ENCODE measurements at regions of chr11 and their contacts with region 1.

Region 1: DNA sequence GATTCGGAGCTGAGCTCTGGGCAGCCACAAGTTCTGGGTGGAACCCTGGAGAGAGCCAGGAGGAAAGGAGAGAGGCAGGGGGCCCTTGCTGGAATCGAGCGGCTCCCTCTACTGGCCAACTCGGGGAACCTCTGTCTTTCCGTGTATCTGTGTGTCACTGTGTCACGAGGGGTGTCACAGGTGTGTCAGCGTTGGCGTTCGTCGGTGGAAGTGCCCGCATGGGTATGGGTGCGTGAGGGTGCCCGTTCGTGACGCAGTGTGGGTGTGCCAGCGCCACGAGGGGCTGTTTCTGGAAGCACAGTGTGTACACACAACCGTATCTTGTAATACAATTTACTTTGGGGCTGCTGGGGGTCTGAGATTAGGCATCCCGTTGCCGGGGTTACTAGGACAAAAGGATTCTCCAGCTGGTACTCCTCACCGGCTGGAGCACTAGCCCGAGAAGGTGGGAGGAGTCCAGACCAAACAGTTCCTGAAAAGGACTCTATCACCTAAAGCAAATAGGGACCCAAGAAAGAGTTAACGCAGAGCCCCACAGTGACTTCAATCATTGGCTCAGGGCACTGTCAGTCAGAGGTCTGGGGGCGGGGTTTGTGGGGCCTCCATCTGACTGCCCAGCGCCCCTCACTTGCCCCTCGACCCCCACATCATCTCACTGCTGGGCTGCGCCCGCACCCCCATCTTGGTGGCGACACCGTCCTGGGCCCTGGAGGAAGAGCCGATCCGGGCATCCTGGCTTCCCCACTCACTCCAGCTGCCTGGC is 2.6 kb upstream of the BCL9L start:
- DNase-seq: no peak
- H3K4me3 ChIP-seq: peak overlapping the region; percentile 72
- CTCF ChIP-seq: peak; percentile 89

Region 2: GRCh38 chr11:118715837-118716260 is 212.4 kb before region 1 on chr11:
- CTCF ChIA-PET with region 1: no interaction called
- POLR2A ChIA-PET with region 1: no interaction called
- DNase-seq: no peak
- H3K4me3 ChIP-seq: no peak overlapping the region
- CTCF ChIP-seq: no peak

Region 3: GRCh38 chr11:118771547-118772288 is 156.6 kb before region 1 on chr11:
- CTCF ChIA-PET with region 1: interaction called, 12 read pairs
- POLR2A ChIA-PET with region 1: no interaction called
- DNase-seq: no peak
- H3K4me3 ChIP-seq: no peak overlapping the region
- CTCF ChIP-seq: no peak

Region 4: GRCh38 chr11:118878163-118878563 is 50.1 kb before region 1 on chr11:
- CTCF ChIA-PET with region 1: interaction called, 11 read pairs
- POLR2A ChIA-PET with region 1: no interaction called
- DNase-seq: no peak
- H3K4me3 ChIP-seq: no peak overlapping the region
- CTCF ChIP-seq: no peak

Region 5: DNA sequence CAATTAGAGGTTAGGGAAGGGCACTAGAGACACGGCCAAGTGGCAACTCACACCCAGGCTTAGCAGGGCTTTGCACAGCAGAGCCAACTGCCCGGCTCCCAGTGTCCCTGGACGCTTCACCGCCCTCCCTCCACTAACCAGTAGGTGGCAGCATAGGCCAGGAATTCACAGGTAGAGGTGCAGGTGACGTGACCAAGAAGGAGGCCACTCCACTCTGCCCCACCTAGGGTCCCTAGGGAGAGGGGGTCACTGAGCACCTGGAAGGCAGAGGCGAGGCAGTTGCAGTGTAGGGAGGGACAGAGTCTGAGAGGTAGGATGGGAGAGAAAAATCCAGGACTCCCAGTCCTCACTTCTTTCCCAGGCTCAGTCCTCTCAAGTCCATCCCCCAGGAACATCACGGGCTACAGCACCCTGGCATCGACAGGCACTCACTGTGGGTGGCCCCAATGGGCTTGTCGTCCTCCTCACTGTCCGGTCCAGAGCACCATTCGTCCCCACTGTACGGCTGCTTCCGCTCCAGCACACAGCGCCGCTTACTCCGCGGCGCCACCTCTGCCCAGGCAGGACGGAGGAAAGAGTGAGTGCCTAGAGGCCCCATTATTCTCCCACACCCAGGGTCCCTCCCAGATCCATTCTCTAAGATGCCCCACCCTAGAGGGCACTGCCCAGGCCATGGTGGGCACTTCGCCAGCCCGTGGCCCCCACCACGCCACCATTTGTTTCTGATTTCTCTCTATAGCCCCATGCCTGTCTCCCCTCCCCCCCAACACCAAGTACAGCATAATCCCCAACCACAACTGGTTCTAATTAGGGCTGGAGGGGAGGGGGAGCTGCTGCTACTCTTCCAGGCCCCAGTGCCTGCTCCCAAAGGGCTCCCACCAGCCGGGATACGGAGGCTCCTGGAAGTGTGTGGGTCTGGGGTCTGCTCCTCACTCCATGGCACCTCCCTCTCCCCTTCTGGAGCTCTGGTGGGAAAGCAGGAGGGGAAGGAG is 20.9 kb before region 1 on chr11:
- CTCF ChIA-PET with region 1: no interaction called
- POLR2A ChIA-PET with region 1: interaction called, 43 read pairs
- DNase-seq: no peak
- H3K4me3 ChIP-seq: peak overlapping the region; percentile 46
- CTCF ChIP-seq: peak; percentile 89

Region 6: GRCh38 chr11:118939953-118940598 is 11.8 kb after region 1 on chr11:
- CTCF ChIA-PET with region 1: interaction called, 43 read pairs
- POLR2A ChIA-PET with region 1: interaction called, 3 read pairs
- DNase-seq: no peak
- H3K4me3 ChIP-seq: no peak overlapping the region
- CTCF ChIP-seq: no peak

Region 7: GRCh38 chr11:118956094-118956846 is 28.0 kb after region 1 on chr11 and contains the start of gene UPK2:
- CTCF ChIA-PET with region 1: interaction called, 17 read pairs
- POLR2A ChIA-PET with region 1: no interaction called
- DNase-seq: no peak
- H3K4me3 ChIP-seq: no peak within 1 kb of the TSS
- CTCF ChIP-seq: peak; percentile 98

Region 8: GRCh38 chr11:119084663-119085436 is 156.6 kb after region 1 on chr11 and contains the start of gene HMBS:
- CTCF ChIA-PET with region 1: no interaction called
- POLR2A ChIA-PET with region 1: no interaction called
- DNase-seq: no peak
- H3K4me3 ChIP-seq: peak within 1 kb of the TSS; percentile 94
- CTCF ChIP-seq: no peak

Measured in AG04449 (cell line).